ENCODE measurements at regions of chr5 and their contacts with region 1.

Region 1: GRCh38 chr5:145228564-145228963 is 606.6 kb downstream of the PRELID2 start:
- DNase-seq: no peak
- ATAC-seq: no peak
- H3K4me3 ChIP-seq: no peak overlapping the region
- H3K4me3 Mint-ChIP-seq: no peak overlapping the region
- H3K27ac ChIP-seq: no peak overlapping the region
- H3K27ac Mint-ChIP-seq: no peak overlapping the region
- H3K4me1 ChIP-seq: no peaks in the 10 kb centered on the region
- H3K4me1 Mint-ChIP-seq: no peaks in the 10 kb centered on the region
- H3K27me3 ChIP-seq: no peaks in the 10 kb centered on the region
- H3K27me3 Mint-ChIP-seq: no peaks in the 10 kb centered on the region

Region 2: DNA sequence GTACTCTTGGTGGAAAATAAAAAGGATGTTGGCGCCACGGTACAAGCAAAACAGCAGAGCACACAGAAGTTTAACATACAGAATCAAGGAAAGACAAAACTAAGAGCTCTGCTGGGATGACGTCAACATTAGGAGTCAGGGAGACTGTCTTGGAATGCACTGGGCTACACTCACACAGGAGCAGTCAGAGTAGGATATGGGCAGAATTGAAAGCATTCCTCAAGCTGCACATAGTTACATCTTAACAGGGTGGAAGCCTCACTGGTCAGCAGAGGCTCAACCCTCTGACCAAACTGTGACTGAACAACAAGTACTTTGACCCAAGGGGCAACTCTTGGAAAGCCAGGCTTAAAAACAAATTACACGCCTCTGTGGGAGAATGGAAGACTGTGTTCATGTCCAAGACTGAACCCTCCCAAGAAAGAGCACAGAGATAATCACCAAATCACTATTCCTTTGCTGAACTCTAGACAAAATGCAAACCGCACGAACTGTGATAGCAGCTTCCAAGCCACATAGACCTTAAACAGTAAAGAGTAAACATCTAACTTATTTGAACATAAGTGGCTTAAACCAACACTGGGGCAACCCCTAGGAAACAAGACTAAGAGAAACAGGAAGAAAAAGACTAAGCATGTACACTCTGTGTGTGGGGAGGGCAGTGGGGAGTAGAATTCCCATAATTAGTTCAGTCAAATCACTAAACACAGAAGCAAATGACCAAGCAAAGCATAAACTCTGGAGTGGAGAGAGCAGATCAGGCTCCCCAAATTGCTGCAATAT is 166.1 kb before region 1 on chr5:
- CTCF ChIA-PET with region 1: no interaction called
- POLR2A ChIA-PET with region 1: no interaction called
- DNase-seq: no peak
- ATAC-seq: no peak
- H3K4me3 ChIP-seq: no peak overlapping the region
- H3K4me3 Mint-ChIP-seq: no peak overlapping the region
- H3K27ac ChIP-seq: no peak overlapping the region
- H3K27ac Mint-ChIP-seq: no peak overlapping the region
- H3K4me1 ChIP-seq: no peaks in the 10 kb centered on the region
- H3K4me1 Mint-ChIP-seq: no peaks in the 10 kb centered on the region
- H3K27me3 ChIP-seq: no peaks in the 10 kb centered on the region
- H3K27me3 Mint-ChIP-seq: no peaks in the 10 kb centered on the region

Region 3: GRCh38 chr5:145203193-145203592 is 25.4 kb before region 1 on chr5:
- CTCF ChIA-PET with region 1: no interaction called
- POLR2A ChIA-PET with region 1: interaction called in 1 of 2 experiments, 11 read pairs
- DNase-seq: no peak
- ATAC-seq: no peak
- H3K4me3 ChIP-seq: no peak overlapping the region
- H3K4me3 Mint-ChIP-seq: no peak overlapping the region
- H3K27ac ChIP-seq: no peak overlapping the region
- H3K27ac Mint-ChIP-seq: no peak overlapping the region
- H3K4me1 ChIP-seq: no peaks in the 10 kb centered on the region
- H3K4me1 Mint-ChIP-seq: no peaks in the 10 kb centered on the region
- H3K27me3 ChIP-seq: no peaks in the 10 kb centered on the region
- H3K27me3 Mint-ChIP-seq: no peaks in the 10 kb centered on the region

Measured in T-cell (primary cell).